Left colon (tissue), 2 donors: ENCODE measurements at regions of chr9 and their contacts with region 1.

Region 1: GRCh38 chr9:89000973-89001916 is 10.0 kb downstream of the S1PR3 start:
- DNase-seq: peak; percentile 74 to 88
- ATAC-seq: peak; percentile 87

Region 2: DNA sequence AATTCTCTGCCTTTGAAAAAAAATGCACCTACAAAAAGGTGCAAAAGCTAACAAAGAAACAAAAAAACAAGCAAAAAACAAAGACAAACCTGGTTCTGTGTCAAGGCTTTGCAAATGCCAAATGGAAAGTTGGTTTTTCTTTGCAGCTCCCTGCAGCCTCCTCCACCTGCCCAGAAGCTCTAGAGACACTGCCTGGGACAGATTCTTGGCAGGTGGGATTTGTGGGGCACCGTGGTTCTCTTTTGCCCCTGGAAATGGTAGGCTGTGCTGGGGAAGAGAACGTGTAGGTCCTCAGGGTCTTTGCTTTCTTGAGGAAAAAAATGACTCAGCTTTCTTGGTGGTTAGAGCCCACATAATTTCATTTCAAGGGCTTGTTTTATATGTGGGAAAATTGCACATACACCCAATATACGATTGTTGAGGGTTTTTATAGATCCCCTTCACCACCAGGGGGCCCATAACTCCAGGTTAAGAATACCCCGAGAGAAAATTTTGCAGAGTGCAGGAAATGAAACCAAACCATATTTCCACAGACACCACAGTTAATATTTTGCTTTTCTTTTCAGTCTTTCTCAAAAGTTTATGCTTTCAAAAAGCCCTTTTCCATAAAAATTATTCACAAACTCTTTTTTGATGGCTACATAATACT is 407.6 kb before region 1 on chr9:
- intact Hi-C with region 1: loop called (anchors 5 kb)
- DNase-seq: peak in 1 of 2 donors; percentile 61
- ATAC-seq: peak; percentile 42